Activated CD4-positive, alpha-beta T cell treated with anti-CD3 and anti-CD28 coated beads for 36 hours (primary cell): ENCODE measurements at regions of chr2 and their contacts with region 1.

Region 1: DNA sequence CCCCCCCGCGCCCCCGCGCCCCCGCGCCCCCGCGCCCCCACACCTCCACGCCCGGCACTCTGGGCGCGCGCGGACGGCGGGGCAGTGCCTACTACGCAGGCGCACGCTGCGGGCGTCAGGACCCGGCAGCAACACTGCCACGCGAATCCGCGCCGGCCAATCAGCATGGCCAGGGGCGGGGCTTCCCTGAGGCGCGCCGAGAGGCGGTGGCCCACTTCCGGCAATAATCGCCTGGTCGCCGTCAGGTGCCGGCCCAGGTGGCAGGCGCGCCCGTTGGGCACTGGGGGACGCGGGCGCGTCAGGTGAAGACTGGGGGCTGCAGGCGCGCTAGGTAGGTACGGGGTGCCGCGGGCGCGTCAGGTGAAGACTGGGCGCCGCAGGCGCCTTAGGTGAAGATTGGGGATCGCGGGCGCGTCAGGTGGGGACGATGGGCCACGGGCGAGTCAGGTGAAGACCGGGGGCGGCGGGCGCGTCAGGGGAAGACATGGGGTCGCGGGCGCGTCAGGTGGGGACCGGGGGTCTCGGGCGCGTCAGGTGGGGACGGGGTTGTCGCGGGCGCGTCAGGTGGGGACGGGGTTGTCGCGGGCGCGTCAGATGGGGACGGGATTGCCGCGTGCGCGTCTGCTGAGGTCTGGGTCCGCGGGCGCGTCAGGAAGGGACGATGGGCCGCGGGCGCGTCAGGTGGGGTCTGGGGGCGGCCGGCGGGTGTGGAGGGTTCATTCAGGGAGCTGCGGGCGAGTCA is 219.1 kb downstream of the RTP5 start:
- DNase-seq: peak; percentile 95
- ATAC-seq: peak; percentile 96
- H3K4me3 Mint-ChIP-seq: peak overlapping the region; percentile 82
- H3K27ac Mint-ChIP-seq: peak overlapping the region; percentile 55
- H3K4me1 Mint-ChIP-seq: peaks cover 37% of the 10 kb centered on the region
- H3K27me3 Mint-ChIP-seq: peaks cover 3% of the 10 kb centered on the region

Region 2: DNA sequence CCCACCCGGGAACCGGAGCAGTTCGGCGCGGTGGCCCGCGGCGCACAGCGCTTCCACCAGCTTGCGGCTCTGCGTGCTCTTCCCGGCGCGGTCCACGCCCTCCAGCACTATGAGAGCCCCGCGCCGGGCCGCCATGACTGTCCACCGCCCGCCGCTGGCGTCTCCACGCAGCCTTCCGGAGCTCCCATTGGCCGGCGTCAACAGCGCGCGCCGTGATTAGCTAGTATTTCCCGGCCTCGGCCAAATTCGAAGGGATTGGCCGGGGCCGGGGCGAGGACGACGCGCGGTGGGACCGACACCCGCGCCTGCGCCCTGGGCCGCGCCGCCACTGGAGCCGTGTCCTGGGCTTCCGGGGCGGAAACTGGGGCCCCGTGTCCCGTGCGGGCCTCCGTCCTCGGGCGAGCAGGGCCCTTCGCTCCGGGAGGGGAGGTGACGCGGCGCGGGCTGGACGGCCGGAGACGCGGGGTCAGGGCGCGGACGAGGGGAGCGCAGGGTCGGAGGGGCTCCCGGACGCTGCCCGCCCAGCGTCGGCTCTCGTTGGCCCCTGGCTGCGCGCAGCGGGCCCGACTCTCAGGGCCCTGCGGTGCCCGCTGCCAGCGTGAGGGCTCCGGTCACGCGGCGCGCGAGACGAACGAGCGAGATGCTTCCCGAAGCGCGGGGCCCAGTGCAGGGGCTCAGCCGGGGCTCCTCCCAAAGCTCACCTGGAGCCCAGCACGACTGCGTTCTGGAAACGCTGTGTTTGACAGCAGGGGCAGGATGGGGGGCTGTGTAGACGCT is 401.8 kb before region 1 on chr2 and contains the start of gene DTYMK:
- CTCF ChIA-PET with region 1: no interaction called
- POLR2A ChIA-PET with region 1: no interaction called
- intact Hi-C with region 1: loop called in 1 of 2 experiments (anchors 5 kb)
- DNase-seq: peak; percentile 98
- ATAC-seq: peak; percentile 96
- H3K4me3 Mint-ChIP-seq: peak within 1 kb of the TSS; percentile 98
- H3K27ac Mint-ChIP-seq: peak within 1 kb of the TSS; percentile 96
- H3K4me1 Mint-ChIP-seq: peaks cover 32% of the 10 kb centered on the region
- H3K27me3 Mint-ChIP-seq: no peaks in the 10 kb centered on the region
- total RNA-seq, gene DTYMK: 79.8 to 93.1 TPM

Region 3: DNA sequence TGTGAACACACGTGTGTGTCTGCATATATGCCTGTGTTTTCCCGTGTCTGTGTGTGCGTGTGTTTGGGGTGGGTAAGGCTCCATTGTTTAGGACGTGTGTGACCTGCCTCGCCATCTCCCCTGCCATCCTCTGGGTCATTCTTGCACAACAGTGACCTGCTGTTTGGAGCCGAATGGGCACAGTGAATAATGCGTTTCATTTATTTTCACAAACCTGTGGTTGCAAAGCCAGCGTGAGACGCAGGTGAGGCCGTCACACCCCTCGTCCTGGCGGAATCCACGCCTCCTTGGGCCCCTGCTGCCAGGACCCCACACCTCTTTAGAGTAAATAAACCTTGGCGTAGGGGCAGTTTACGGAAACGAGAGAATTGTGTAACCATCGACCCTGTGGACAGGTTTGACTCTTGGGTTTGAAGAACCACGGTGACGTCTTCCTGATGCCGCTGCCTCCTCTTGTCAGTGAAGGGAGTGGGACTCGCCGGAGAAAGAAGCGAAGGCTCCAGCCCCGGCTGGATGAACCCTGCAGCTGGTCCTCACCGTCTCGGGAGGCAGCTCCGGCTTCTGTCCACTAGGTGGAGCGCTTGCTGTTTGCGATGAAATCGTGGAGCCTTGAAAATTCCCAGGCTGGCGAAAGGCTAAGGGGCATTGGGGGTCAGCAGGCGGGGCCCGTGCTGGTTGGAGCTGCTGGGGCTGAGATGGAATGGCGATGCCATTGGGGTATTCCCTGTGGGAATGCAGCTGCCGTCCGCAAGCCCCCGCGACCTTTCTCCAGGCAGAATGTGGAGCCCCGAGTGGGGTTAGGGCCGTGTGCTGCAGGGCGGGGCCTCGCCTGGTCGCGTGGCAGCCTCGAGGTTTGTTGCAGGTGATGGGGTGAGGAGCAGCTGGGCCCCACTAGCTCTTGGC is 138.0 kb before region 1 on chr2:
- CTCF ChIA-PET with region 1: no interaction called
- POLR2A ChIA-PET with region 1: no interaction called
- intact Hi-C with region 1: loop called in 1 of 2 experiments (anchors 5 kb)
- DNase-seq: peak; percentile 78
- ATAC-seq: peak; percentile 74
- H3K4me3 Mint-ChIP-seq: no peak overlapping the region
- H3K27ac Mint-ChIP-seq: no peak overlapping the region
- H3K4me1 Mint-ChIP-seq: no peaks in the 10 kb centered on the region
- H3K27me3 Mint-ChIP-seq: no peaks in the 10 kb centered on the region